PC-3 (cell line): ENCODE measurements at regions of chr17 and their contacts with region 1.

Region 1: GRCh38 chr17:73255671-73256181 is 6.0 kb downstream of the CPSF4L start:
- DNase-seq: peak; percentile 78
- ATAC-seq: peak; percentile 92
- H3K4me3 ChIP-seq: no peak overlapping the region
- H3K27ac ChIP-seq: no peak overlapping the region
- H3K4me1 ChIP-seq: no peaks in the 10 kb centered on the region
- H3K27me3 ChIP-seq: no peaks in the 10 kb centered on the region
- CTCF ChIP-seq: peak; percentile 100

Region 2: GRCh38 chr17:73132085-73132492 is 123.6 kb before region 1 on chr17:
- CTCF ChIA-PET with region 1: no interaction called
- POLR2A ChIA-PET with region 1: no interaction called
- intact Hi-C with region 1: no loop called
- DNase-seq: no peak
- ATAC-seq: no peak
- H3K4me3 ChIP-seq: no peak overlapping the region
- H3K27ac ChIP-seq: no peak overlapping the region
- H3K4me1 ChIP-seq: no peaks in the 10 kb centered on the region
- H3K27me3 ChIP-seq: no peaks in the 10 kb centered on the region
- CTCF ChIP-seq: no peak

Region 3: DNA sequence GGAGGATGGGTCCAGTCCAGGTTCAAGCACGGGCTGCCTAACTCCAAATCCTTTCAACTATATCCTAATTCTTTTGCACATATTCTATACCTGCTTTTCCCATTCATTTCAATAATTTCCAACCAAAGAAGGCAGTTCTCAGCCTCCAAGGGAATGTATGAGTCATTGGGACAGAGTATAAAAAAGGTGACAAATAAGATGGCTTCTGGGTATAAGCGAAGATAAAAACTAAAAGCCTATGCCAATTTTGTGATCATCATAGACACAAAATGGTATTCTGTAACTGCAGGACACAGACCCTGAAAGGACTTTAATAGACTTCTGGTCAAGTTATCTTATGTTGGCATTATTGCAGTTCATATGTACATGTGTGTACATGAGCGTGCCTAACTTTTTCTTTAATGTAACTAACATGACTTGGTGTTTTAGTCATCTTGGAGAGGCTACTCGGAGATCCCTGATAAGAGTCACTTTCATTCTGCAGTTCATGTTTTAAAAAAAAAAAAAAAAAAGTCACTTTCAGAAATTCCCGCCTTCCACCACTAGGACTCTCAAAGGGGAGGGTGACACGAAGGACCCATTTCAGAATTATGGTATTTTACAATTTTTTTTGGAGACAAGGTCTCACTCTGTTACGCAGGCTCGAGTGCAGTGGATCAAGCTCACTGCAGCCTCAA is 45.6 kb before region 1 on chr17:
- CTCF ChIA-PET with region 1: no interaction called
- POLR2A ChIA-PET with region 1: interaction called, 13 read pairs
- intact Hi-C with region 1: no loop called
- DNase-seq: peak; percentile 48
- ATAC-seq: no peak
- H3K4me3 ChIP-seq: no peak overlapping the region
- H3K27ac ChIP-seq: no peak overlapping the region
- H3K4me1 ChIP-seq: peaks cover 5% of the 10 kb centered on the region; the same call in 1 of the 2 replicates
- H3K27me3 ChIP-seq: no peaks in the 10 kb centered on the region
- CTCF ChIP-seq: peak; percentile 62

Region 4: DNA sequence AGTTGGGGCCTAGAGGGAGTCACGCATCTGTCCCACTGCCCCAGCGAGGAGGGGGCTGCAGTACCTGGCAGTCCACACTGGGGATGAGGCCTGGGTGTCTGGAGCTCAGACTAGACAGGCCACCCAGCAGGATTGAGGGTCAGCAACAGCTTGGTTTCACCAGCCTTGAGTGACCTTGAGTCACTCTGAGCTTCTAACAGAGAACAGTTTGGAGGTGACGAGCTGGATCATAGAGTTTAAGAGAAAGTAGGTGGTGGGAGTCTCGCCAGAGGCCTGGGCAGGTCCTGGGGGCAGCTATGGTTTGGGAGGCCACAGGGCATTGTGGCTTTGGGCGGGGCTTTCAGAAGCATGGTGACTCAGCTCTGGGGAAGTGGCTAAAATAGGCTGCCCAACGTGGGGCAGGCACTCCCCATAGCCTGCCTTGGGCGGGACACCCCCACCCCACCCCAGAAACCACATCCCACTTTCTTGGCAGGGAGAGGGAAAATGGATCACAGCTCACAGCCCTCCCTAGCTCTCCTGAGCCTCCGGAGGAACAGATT is 35.6 kb after region 1 on chr17:
- CTCF ChIA-PET with region 1: interaction called, 6 read pairs
- POLR2A ChIA-PET with region 1: no interaction called
- intact Hi-C with region 1: loop called (anchors 1 kb)
- DNase-seq: peak; percentile 98
- ATAC-seq: peak; percentile 71
- H3K4me3 ChIP-seq: peak overlapping the region; percentile 42
- H3K27ac ChIP-seq: peak overlapping the region; percentile 95
- H3K4me1 ChIP-seq: peaks cover 84% of the 10 kb centered on the region
- H3K27me3 ChIP-seq: no peaks in the 10 kb centered on the region
- CTCF ChIP-seq: no peak

Region 5: DNA sequence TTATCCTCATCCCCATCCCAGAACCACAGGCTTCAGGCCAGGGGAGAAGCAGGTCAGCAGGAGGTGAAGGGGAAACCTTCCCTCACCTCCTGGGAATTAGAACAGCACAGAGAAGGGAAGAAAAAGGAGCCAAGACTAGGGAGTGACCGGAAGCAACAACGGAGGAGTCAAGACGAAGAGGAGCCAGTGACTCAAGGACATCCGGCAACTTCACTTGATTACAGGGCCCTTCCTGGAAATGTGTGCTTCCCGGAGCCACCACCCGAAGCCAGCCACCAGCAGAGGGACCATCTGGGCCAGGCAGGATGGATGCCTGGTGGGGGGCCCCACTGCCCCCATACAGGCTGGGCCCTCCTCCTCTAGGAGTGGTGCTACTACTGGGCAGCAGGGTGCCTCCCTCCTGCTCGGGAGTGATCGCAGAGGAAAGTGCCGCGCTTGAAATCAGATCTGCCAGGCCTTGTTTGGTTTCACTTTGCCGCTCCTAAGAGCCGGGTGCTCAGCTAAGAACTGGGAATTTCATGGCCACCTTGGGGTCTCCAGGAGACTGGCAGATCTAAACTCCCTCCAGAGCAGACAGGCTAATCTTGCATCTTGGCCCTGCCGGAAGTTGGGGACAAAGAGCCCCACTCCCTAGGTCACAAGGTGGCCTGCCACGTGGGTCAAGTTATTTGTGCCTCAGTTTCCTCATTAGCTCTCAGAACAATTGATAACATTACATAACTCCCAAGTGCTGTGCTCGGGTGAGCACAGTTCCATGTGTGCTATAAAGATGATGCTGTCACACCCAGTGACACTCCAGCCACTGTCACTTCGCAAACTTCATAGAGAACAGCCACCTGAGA is 49.5 kb after region 1 on chr17:
- CTCF ChIA-PET with region 1: interaction called, 4 read pairs
- POLR2A ChIA-PET with region 1: no interaction called
- intact Hi-C with region 1: loop called (anchors 5 kb)
- DNase-seq: peak; percentile 84
- ATAC-seq: peak; percentile 64
- H3K4me3 ChIP-seq: peak overlapping the region; percentile 55
- H3K27ac ChIP-seq: peak overlapping the region; percentile 82
- H3K4me1 ChIP-seq: peaks cover 67% of the 10 kb centered on the region
- H3K27me3 ChIP-seq: no peaks in the 10 kb centered on the region
- CTCF ChIP-seq: peak; percentile 60

Region 6: DNA sequence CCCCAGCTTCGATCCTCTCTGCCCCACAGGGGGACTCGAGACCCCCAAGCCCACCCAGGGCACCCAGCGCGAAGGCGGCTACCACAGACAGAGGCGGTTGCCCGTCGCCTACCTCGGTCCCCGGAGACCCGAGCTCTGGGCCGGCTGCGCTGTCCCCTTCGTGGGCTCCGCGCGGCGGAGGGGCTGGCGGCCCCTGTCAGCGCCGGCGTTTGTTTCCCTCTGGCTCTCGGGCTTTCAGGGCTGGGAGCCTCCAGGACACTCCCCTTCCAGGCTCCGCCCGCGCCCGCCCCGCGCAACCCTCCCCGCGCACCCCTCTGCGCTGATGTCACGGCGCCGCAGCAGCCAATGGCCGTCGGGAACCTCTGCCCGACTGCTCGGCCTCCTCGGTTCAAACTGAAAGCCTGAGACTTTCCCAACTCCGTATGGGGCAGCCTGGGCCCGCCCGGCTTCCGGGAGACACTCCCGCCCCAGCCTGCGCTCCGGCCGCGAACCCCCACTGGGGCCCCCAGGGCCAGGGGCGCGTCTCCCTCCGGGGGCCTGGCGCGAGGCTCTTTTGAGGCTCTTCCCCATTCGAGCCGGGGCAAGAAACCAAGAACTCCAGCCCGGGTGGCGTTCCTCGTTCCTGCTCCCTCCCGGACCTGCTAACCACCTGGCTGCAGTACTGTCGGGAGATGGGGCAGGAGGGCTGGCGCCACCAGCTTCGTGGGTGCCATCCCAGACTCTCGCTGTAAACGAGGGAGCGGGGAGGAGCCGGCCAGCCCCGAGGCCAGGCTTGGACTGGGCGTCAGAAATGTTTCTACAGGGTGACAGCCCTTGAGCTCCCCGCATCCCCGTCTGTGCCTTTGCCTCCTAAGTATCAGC is 56.3 kb after region 1 on chr17 and contains the start of gene CDC42EP4:
- CTCF ChIA-PET with region 1: interaction called, 6 read pairs
- POLR2A ChIA-PET with region 1: interaction called, 11 read pairs
- intact Hi-C with region 1: loop called (anchors 5 kb)
- DNase-seq: peak; percentile 98
- ATAC-seq: peak; percentile 81
- H3K4me3 ChIP-seq: peak within 1 kb of the TSS; percentile 94
- H3K27ac ChIP-seq: peak within 1 kb of the TSS; percentile 82
- H3K4me1 ChIP-seq: peaks cover 35% of the 10 kb centered on the region
- H3K27me3 ChIP-seq: no peaks in the 10 kb centered on the region
- CTCF ChIP-seq: no peak
- total RNA-seq, gene CDC42EP4: 83.1 and 109 TPM in 2 replicates

Region 7: DNA sequence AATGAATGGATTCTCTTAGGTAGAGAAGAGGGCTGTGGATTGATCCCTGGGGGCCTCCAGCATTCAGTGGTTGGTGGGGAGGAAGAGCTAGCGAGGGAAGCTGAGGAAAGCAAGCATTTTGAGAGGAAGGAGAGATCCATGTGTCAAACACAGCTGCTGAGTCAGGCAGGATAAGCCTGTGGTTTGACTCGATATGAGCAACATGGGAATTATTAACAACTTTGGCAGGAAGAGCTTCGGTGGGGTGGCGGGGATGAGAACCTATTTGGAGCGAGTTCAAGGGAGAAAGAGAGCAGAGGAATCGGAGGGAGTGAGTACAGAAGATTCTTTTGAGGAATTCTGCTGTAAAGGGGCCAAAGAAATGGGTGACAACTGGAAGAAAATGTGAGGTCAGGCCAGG is 115.6 kb after region 1 on chr17:
- CTCF ChIA-PET with region 1: interaction called, 46 read pairs
- POLR2A ChIA-PET with region 1: no interaction called
- intact Hi-C with region 1: loop called (anchors 1 kb)
- DNase-seq: peak; percentile 90
- ATAC-seq: peak; percentile 61
- H3K4me3 ChIP-seq: no peak overlapping the region
- H3K27ac ChIP-seq: peak overlapping the region; percentile 15; the same call in 1 of the 2 replicates
- H3K4me1 ChIP-seq: peaks cover 10% of the 10 kb centered on the region
- H3K27me3 ChIP-seq: no peaks in the 10 kb centered on the region
- CTCF ChIP-seq: no peak

Region 8: GRCh38 chr17:73625991-73626673 is 370.4 kb after region 1 on chr17:
- CTCF ChIA-PET with region 1: no interaction called
- POLR2A ChIA-PET with region 1: no interaction called
- intact Hi-C with region 1: no loop called
- DNase-seq: no peak
- ATAC-seq: no peak
- H3K4me3 ChIP-seq: no peak overlapping the region
- H3K27ac ChIP-seq: no peak overlapping the region
- H3K4me1 ChIP-seq: no peaks in the 10 kb centered on the region
- H3K27me3 ChIP-seq: peaks cover 32% of the 10 kb centered on the region
- CTCF ChIP-seq: no peak